K562 (cell line): ENCODE measurements at regions of chr11 and their contacts with region 1.

Region 1: GRCh38 chr11:68632802-68633201 is 51.5 kb upstream of the GAL start:
- DNase-seq: peak; percentile 57 to 82 (median 61)
- ATAC-seq: peak; percentile 98
- H3K4me3 ChIP-seq: no peak overlapping the region
- H3K27ac ChIP-seq: no peak overlapping the region
- H3K4me1 ChIP-seq: no peaks in the 10 kb centered on the region; a peak in 2 of 5 replicates
- H3K27me3 ChIP-seq: peaks cover 0 to 4% of the 10 kb centered on the region in 2 experiments; a peak in 2 of 5 replicates
- CTCF ChIP-seq: peak; percentile 83 to 92 (median 89)
- EP300 ChIP-seq: no peak
- POLR2A ChIP-seq: no peak
- RAD21 ChIP-seq: peak; percentile 77 to 94

Region 2: DNA sequence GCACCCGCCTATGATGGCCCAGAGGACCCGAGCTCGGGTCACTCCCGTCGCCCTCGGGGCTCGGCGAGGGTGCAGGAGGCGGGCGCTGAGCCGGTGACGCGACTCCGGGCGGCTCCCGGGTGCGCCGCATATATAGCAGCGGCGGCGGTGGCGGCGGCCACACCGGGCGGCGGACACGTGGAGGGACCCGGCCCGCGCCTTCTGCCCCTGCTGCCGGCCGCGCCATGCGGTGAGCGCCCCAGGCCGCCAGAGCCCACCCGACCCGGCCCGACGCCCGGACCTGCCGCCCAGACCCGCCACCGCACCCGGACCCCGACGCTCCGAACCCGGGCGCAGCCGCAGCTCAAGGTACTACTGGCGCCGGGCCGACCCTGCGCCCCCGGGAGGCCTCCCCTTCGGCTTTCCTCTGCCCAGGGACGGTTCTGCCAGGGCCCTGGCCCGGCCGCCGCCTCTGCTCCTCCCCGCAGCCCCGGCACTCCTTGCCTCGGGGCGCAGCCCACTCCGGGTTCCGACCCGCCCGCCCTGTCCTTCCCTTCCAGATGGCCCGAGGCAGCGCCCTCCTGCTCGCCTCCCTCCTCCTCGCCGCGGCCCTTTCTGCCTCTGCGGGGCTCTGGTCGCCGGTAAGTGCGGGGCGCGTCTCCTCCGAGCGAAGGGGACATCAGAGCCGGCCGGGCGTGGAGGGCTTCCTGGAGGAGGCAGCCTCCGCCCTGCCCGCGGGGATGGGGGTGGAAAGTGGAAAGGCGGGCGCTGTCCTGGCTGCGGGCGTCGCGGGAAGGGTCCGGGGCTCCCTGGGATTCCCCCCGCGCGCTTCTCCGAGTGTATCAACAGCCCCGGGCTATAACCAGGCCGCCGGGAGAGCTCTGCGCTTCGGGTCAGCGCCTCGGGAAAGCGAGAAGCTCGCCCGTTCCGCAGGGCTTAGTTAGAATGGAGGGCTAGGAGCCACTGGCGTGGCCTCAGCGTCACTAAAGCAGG is 51.9 kb after region 1 on chr11 and contains the start of gene GAL:
- CTCF ChIA-PET with region 1: no interaction called
- POLR2A ChIA-PET with region 1: no interaction called
- in situ Hi-C with region 1: no loop called
- intact Hi-C with region 1: loop called (anchors 5 kb)
- DNase-seq: peak; percentile 72 to 85 (median 82)
- ATAC-seq: peak; percentile 91
- H3K4me3 ChIP-seq: peak within 1 kb of the TSS; percentile 79
- H3K27ac ChIP-seq: peak within 1 kb of the TSS; percentile 67
- H3K4me1 ChIP-seq: peaks cover 4 to 34% of the 10 kb centered on the region in 2 experiments; a peak in 3 of 5 replicates
- H3K27me3 ChIP-seq: no peaks in the 10 kb centered on the region
- CTCF ChIP-seq: no peak
- EP300 ChIP-seq: no peak
- POLR2A ChIP-seq: peak; percentile 61; the same call in 1 of the 2 replicates
- RAD21 ChIP-seq: no peak
- polyA plus RNA-seq, gene GAL: 10.6 to 13.3 TPM

Region 3: GRCh38 chr11:68869251-68869960 is 236.6 kb after region 1 on chr11:
- CTCF ChIA-PET with region 1: no interaction called
- POLR2A ChIA-PET with region 1: no interaction called
- in situ Hi-C with region 1: no loop called
- intact Hi-C with region 1: loop called (anchors 5 kb)
- DNase-seq: peak in 1 of 4 experiments; percentile 31
- ATAC-seq: peak; percentile 57
- H3K4me3 ChIP-seq: peak overlapping the region; percentile 31
- H3K27ac ChIP-seq: no peak overlapping the region
- H3K4me1 ChIP-seq: peaks cover 0 to 15% of the 10 kb centered on the region in 2 experiments; a peak in 2 of 5 replicates
- H3K27me3 ChIP-seq: no peaks in the 10 kb centered on the region
- CTCF ChIP-seq: peak in 1 of 3 experiments; percentile 36; a peak in 2 of 6 replicates
- EP300 ChIP-seq: no peak
- POLR2A ChIP-seq: no peak
- RAD21 ChIP-seq: peak in 1 of 2 experiments; percentile 40; a peak in 2 of 4 replicates

Region 4: GRCh38 chr11:69088676-69089146 is 455.9 kb after region 1 on chr11:
- CTCF ChIA-PET with region 1: no interaction called
- POLR2A ChIA-PET with region 1: no interaction called
- in situ Hi-C with region 1: loop called (anchors 10 kb)
- intact Hi-C with region 1: loop called (anchors 5 kb)
- DNase-seq: peak; percentile 87 to 92 (median 92)
- ATAC-seq: peak; percentile 96
- H3K4me3 ChIP-seq: no peak overlapping the region
- H3K27ac ChIP-seq: no peak overlapping the region
- H3K4me1 ChIP-seq: peaks cover 0 to 16% of the 10 kb centered on the region in 2 experiments; a peak in 1 of 5 replicates
- H3K27me3 ChIP-seq: no peaks in the 10 kb centered on the region
- CTCF ChIP-seq: peak; percentile 83 to 91 (median 86)
- EP300 ChIP-seq: no peak
- POLR2A ChIP-seq: no peak
- RAD21 ChIP-seq: peak; percentile 68 to 85

Region 5: GRCh38 chr11:69642913-69643632 is 1010.3 kb after region 1 on chr11:
- CTCF ChIA-PET with region 1: no interaction called
- POLR2A ChIA-PET with region 1: no interaction called
- in situ Hi-C with region 1: no loop called
- intact Hi-C with region 1: loop called (anchors 10 kb)
- DNase-seq: peak; percentile 81 to 88 (median 84)
- ATAC-seq: peak; percentile 88
- H3K4me3 ChIP-seq: peak overlapping the region; percentile 54
- H3K27ac ChIP-seq: peak overlapping the region; percentile 66; the same call in 1 of the 3 replicates
- H3K4me1 ChIP-seq: peaks cover 8 to 80% of the 10 kb centered on the region in 2 experiments; a peak in 4 of 5 replicates
- H3K27me3 ChIP-seq: peaks cover 9 to 13% of the 10 kb centered on the region in 2 experiments
- CTCF ChIP-seq: peak; percentile 90 to 94 (median 92)
- EP300 ChIP-seq: no peak
- POLR2A ChIP-seq: no peak
- RAD21 ChIP-seq: peak; percentile 98

Region 6: DNA sequence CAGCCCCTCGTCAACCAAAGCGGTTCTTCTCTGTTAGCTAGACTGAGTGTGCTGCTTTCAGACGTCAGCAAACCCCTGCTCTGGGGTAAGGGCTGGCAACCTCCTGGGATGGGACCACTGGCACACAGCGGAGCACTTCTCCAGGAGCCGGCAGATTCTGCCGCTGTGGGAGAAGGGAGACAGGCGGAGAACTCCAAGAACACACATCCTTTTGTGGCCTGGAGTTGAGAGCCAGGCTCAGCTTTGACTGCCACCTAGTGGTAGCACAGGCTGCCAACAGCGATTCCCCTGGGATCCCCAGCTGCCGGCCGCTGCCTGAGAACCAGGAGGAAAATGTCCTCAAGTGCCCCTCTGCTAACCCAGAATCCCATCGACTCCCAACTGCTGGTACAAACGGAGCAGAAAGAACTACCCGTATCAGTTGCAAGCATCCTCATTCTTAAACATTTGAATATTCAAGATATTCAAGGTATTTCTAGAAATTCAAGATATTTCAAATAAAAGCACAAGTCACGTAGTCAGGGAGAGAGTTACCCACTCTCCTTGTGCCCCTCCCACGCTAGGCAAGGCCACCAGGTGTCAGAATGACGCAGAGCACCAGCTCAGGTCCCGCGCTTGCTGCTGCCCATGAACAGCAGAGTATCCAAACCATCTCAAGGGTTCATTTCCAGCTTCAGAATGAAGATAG is 1037.5 kb after region 1 on chr11:
- CTCF ChIA-PET with region 1: no interaction called
- POLR2A ChIA-PET with region 1: no interaction called
- in situ Hi-C with region 1: loop called (anchors 25 kb)
- intact Hi-C with region 1: no loop called
- DNase-seq: peak; percentile 78 to 86 (median 80)
- ATAC-seq: peak; percentile 79
- H3K4me3 ChIP-seq: no peak overlapping the region
- H3K27ac ChIP-seq: no peak overlapping the region
- H3K4me1 ChIP-seq: peaks cover 9 to 18% of the 10 kb centered on the region in 2 experiments; a peak in 4 of 5 replicates
- H3K27me3 ChIP-seq: no peaks in the 10 kb centered on the region
- CTCF ChIP-seq: peak; percentile 84 to 95 (median 89)
- EP300 ChIP-seq: no peak
- POLR2A ChIP-seq: no peak
- RAD21 ChIP-seq: peak; percentile 58 to 74